Dendritic cell treated with granulocyte-macrophage colony-stimulating factor and Interleukin-4, amounts not matched to agents 40 ng/mL and 50 ng/mL, for 4 days (primary cell): ENCODE measurements at regions of chr5 and their contacts with region 1.

Region 1: GRCh38 chr5:173972925-173973615 is 15.9 kb upstream of the C5orf47 start:
- H3K4me3 Mint-ChIP-seq: peak overlapping the region; percentile 77
- H3K27ac Mint-ChIP-seq: peak overlapping the region; percentile 15
- H3K4me1 Mint-ChIP-seq: peaks cover 26% of the 10 kb centered on the region
- H3K27me3 Mint-ChIP-seq: peaks cover 40% of the 10 kb centered on the region

Region 2: DNA sequence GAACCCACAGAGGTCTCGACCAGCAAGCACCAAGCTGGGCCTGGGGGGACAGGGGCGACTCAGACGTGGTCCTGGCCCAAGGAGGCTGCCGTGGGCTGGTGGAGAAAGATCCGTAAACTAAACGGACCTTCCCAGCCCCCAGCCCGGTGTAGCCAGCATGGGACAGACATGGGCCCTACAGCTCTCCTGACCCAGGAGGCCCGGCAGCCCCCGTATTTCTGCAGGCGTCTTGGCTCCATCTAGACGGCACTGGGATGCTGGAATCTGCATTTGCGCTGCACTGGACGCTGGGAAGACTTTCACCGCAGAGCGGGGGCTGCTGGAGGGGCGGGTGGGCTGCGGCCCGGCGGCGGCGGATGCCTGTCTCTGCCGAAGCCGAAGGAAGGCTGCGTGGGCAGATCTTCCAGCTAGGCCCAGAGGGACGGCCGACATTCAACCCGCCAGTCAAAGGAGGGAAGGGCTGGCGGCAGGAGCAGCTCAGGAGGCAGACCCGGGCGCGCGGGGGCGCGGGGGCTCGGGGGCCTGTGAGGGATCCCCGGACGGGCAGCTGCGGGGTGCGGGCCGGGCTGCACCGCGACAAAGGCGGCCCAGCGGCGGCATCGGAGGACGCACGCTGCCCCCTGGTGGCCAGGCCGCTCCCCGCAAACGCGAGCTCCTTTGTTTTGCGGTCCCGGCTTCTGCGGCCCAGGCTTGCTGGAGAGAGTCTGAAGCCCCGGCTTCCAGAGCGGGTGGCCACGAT is 338.6 kb after region 1 on chr5:
- intact Hi-C with region 1: loop called (anchors 5 kb)
- H3K4me3 Mint-ChIP-seq: peak overlapping the region; percentile 47
- H3K27ac Mint-ChIP-seq: no peak overlapping the region
- H3K4me1 Mint-ChIP-seq: peaks cover 5% of the 10 kb centered on the region
- H3K27me3 Mint-ChIP-seq: peaks cover 34% of the 10 kb centered on the region